Heart right ventricle (tissue), 16 donors: ENCODE measurements at regions of chr15 and their contacts with region 1.

Region 1: GRCh38 chr15:26561896-26562295 is 211.0 kb downstream of the GABRB3 start:
- DNase-seq: no peak
- ATAC-seq: peak in 2 of 8 donors; percentile 13 to 24
- H3K4me3 ChIP-seq: no peak overlapping the region
- H3K27ac ChIP-seq: no peak overlapping the region
- H3K4me1 ChIP-seq: peaks cover 0 to 5% (median 0%) of the 10 kb centered on the region in 9 donors
- H3K27me3 ChIP-seq: no peaks in the 10 kb centered on the region
- CTCF ChIP-seq: no peak

Region 2: DNA sequence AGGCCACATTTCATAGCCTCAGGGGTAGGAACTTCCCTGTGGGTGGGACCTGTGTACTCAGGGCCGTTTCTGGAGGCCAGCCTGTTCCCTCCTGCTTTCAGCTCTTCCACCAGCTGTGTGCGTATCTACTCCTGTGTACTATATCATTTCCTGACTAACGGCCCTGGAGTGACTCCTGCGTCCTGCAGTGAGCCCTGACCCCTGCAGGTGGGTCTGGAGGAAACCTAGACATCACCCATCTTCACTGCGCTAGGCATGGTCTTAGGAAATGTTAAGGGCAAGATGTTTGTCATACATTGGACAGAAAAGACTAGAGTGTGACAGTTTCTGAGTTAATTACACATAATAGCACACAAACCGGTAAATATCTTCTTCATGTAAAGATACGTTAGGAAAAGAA is 86.3 kb before region 1 on chr15:
- intact Hi-C with region 1: loop called in 1 of 10 experiments (anchors 10 kb)
- DNase-seq: no peak
- ATAC-seq: no peak
- H3K4me3 ChIP-seq: no peak overlapping the region
- H3K27ac ChIP-seq: no peak overlapping the region
- H3K4me1 ChIP-seq: no peaks in the 10 kb centered on the region
- H3K27me3 ChIP-seq: no peaks in the 10 kb centered on the region
- CTCF ChIP-seq: no peak

Region 3: DNA sequence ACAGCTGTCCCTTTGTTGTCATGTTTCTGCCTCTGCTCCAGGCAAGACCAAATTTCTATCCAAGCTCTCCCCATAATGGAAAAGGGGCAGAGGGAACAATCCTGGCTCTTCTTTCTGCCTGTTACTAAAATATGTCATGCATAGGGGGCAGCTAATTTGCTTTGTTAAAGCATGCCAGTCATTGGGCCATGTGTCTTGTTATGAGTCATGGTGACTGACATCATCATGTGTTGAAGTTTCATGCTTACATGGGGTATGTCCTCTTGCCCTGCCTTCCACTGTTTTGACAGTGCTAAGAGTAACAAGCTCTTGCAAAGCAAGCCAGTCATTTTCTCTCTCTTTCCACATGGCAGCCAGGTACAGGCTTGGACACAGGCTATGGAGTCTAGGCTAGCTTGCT is 57.9 kb before region 1 on chr15:
- intact Hi-C with region 1: loop called in 1 of 10 experiments (anchors 10 kb)
- DNase-seq: no peak
- ATAC-seq: no peak
- H3K4me3 ChIP-seq: no peak overlapping the region
- H3K27ac ChIP-seq: no peak overlapping the region
- H3K4me1 ChIP-seq: peaks cover 0 to 7% (median 0%) of the 10 kb centered on the region in 9 donors
- H3K27me3 ChIP-seq: no peaks in the 10 kb centered on the region
- CTCF ChIP-seq: no peak

Region 4: DNA sequence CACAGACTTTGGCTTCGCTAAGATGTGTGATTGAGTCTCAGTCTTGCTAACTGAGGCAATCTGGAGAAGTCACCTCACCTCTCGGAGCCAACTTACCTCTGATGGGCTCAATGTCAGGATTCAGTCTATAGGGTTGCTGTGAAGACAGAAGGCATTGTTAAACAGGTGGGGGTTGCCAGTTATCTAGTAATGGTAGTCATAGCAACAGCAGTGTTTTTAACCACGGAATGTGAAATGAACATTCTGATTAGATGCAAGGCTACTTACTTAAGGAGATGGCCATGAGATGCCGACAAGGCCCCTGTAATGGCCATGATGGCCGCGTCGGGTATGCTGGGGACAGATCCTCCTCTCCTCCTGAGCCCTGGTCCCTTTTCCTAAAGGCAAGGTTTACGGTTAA is 652.1 kb after region 1 on chr15:
- intact Hi-C with region 1: no loop called
- DNase-seq: no peak
- ATAC-seq: no peak
- H3K4me3 ChIP-seq: no peak overlapping the region
- H3K27ac ChIP-seq: no peak overlapping the region
- H3K4me1 ChIP-seq: no peaks in the 10 kb centered on the region
- H3K27me3 ChIP-seq: no peaks in the 10 kb centered on the region
- CTCF ChIP-seq: no peak